ENCODE measurements at regions of chr6 and their contacts with region 1.

Region 1: GRCh38 chr6:150600301-150601017 is 774 bp downstream of the PLEKHG1 start:
- DNase-seq: peak; percentile 75 to 83 (median 77)
- ATAC-seq: peak; percentile 69 to 86
- H3K4me3 ChIP-seq: peak overlapping the region; percentile 72
- H3K27ac ChIP-seq: peak overlapping the region; percentile 32
- H3K4me1 ChIP-seq: no peaks in the 10 kb centered on the region
- H3K27me3 ChIP-seq: no peaks in the 10 kb centered on the region

Region 2: GRCh38 chr6:150813319-150813992 is 213.0 kb after region 1 on chr6:
- intact Hi-C with region 1: loop called in 1 of 4 experiments (anchors 5 kb)
- DNase-seq: no peak
- ATAC-seq: peak in 1 of 2 donors; percentile 68
- H3K4me3 ChIP-seq: no peak overlapping the region
- H3K27ac ChIP-seq: no peak overlapping the region
- H3K4me1 ChIP-seq: no peaks in the 10 kb centered on the region
- H3K27me3 ChIP-seq: no peaks in the 10 kb centered on the region

Region 3: DNA sequence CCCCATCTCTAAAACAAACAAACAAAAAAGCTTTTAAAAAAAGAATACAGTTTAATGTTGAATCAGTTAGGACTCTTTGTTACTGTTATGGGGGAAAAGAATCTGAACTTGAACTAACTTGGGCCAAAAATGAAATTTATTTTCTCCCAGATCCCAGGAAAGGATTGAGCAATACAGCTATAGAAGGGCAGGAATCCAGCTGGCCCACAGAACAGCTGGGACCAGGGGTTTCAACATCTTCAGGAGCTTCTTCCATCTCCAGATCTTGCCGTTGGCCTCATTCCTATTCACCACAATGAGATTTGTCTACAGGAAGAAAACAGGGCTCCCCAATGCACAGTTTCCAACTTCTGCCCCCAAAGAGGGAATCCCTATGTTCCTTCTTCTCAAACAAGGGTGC is 596.1 kb after region 1 on chr6:
- intact Hi-C with region 1: no loop called
- DNase-seq: peak; percentile 47 to 73 (median 61)
- ATAC-seq: peak; percentile 48 to 79
- H3K4me3 ChIP-seq: no peak overlapping the region
- H3K27ac ChIP-seq: no peak overlapping the region
- H3K4me1 ChIP-seq: no peaks in the 10 kb centered on the region
- H3K27me3 ChIP-seq: no peaks in the 10 kb centered on the region